ENCODE measurements at regions of chr10 and their contacts with region 1.

Region 1: GRCh38 chr10:44932517-44933450 is 21.6 kb downstream of the TMEM72 start:
- DNase-seq: peak; percentile 86
- CTCF ChIP-seq: peak; percentile 97

Region 2: DNA sequence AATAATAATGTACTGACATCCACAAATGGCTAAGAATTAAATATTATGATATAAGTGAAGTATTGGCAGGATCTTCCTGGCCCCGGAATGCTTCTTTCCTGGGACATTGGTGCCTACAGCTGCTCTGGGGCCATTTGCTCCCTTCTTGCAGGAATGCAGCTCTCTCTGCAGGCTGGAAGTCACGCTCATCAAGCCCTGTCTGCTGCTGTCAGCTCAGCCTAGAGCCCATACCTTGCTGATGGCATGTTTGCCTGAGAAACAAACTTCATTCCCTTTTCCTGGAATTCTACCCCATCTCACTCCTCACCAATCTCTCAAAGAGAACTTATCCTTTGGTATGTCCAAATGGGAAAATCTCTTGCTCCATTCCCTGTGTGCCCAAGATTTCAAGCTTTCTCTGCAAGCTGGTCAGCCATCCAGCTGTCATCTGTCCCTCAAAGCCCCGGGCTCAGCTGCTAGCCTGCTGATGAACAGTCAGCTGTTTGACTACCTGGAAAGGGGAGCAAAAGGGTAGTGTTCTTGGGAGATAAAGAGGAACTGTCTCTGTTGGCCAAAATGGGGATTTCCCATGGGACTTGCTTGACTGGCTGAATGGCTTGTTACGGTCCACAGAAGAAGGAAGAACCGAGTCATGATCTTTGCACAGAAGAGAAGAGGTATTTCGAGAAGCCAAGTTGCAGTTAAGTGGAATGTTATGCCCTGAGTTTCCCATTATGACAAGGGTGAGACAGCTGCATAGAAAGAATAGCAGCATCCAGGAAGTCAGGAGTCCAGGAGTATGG is 14.8 kb after region 1 on chr10:
- CTCF ChIA-PET with region 1: interaction called, 211 read pairs
- POLR2A ChIA-PET with region 1: no interaction called
- DNase-seq: peak; percentile 53
- CTCF ChIP-seq: no peak

Region 3: DNA sequence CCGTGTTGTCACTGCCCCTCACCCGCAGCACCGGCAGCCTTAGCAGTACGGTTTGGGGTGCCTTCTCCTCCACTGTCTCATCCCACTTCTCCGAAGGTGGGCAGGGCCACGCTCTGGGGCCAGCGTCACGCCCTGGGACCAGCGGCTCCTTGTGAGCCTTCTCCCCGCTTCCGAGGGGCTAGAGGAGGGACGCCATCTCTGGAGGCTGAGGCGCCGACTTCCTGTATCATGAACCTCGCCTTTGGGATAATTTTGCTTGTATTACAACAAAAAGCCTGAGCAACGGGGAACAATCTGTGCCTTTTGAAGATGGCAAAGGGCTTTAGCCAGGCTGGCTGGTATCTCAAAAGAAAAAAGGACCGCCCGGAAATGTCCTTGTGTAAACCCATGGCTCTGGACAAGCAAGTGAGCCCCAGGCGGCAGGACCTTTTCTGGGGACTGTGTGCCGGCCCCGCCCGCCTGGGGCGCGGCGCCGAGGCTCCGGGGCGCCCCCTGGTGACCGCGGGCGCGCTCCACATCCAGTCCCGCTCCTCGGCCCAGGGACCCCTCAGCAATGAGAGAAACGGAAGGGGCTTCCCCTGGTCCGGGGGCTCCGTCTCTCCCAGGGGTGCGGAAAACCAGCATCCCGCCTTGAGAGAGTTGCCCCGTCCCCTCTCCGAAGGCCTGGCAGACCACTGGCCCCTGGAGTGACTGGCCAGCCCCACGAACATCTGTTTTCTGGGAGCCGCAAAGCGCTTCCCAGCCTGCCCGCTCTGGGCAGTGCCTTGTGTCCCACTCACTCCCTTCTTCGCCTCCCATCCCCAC is 42.0 kb after region 1 on chr10:
- CTCF ChIA-PET with region 1: interaction called, 117 read pairs
- POLR2A ChIA-PET with region 1: interaction called, 6 read pairs
- DNase-seq: peak; percentile 85
- CTCF ChIP-seq: peak; percentile 88

Region 4: DNA sequence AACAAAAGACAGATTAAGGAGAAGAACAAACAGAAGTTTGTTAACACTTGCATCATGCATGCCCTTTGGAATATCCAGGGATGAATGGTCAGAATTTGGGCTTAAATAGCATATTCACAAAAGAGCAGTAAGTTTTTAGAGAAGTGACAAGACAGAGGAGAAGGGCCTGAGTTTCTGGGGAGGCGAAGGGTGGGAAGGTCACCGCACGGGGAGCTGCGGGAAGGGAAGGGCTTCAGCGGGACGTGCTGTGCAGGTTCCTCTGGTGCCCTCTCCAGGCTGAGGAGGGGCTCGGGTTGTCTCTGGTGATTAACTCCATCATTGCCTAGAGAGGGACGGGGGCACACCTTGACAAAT is 57.5 kb after region 1 on chr10:
- CTCF ChIA-PET with region 1: interaction called, 18 read pairs
- POLR2A ChIA-PET with region 1: no interaction called
- DNase-seq: no peak
- CTCF ChIP-seq: peak; percentile 28

Region 5: DNA sequence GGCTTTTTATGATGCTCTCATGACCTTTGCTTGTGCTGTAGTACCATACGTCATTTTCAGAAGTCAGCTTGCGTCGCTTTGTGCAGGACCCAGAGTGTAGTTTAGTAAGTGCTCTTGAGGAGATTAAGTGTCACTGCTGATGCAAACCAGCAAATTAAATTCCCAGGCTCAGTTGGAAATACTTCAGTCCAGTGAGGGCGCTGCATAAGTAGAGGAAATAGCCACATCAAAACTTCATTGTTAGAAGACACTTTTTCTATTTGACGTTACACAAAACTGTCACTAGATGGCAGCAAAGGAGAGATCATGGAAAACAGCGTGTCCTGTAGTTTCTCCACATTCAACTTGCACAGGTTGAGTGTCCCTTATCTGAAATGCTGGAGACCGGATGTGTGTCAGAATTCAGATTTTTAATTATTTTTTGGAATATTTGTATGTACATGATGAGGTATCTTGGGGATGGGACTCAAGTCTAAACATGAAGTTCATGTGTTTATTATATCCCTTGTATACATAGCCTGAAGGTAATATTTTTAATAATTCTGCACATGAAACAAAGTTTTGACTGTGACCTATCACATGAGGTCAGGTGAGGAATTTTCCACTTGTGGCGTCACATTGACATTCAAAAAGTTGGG is 75.9 kb after region 1 on chr10:
- CTCF ChIA-PET with region 1: interaction called, 19 read pairs
- POLR2A ChIA-PET with region 1: no interaction called
- DNase-seq: peak; percentile 60
- CTCF ChIP-seq: peak; percentile 64

Region 6: GRCh38 chr10:45023426-45023825 is 90.6 kb after region 1 on chr10:
- CTCF ChIA-PET with region 1: no interaction called
- POLR2A ChIA-PET with region 1: no interaction called
- DNase-seq: no peak
- CTCF ChIP-seq: no peak

Region 7: DNA sequence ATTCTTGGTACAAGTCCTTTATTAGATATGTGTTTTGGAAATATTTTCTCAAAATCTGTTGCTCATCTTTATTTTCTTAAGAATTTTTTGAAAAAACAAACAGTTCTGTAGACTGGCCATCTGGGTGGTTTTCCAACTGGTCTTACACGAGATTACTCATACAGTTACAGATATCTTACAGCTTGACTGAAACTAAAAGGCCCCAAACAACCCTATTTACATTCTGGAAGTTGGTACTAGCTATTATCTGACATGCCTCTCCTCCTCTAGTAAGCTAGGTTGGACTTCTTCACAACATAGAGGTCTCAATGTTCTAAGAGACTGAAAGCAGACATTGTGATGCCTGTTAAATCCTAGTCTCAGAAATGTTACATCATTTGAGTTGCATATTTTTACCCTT is 119.9 kb after region 1 on chr10:
- CTCF ChIA-PET with region 1: no interaction called
- POLR2A ChIA-PET with region 1: no interaction called
- DNase-seq: no peak
- CTCF ChIP-seq: no peak

Region 8: GRCh38 chr10:45302573-45302972 is 369.8 kb after region 1 on chr10:
- CTCF ChIA-PET with region 1: no interaction called
- POLR2A ChIA-PET with region 1: no interaction called
- DNase-seq: no peak
- CTCF ChIP-seq: no peak